HCT116 (cell line): ENCODE measurements at regions of chr17 and their contacts with region 1.

Region 1: GRCh38 chr17:49997791-49998703 is 3.0 kb upstream of the DLX3 start:
- DNase-seq: peak; percentile 88
- ATAC-seq: peak; percentile 86
- H3K4me3 ChIP-seq: no peak overlapping the region
- H3K27ac ChIP-seq: no peak overlapping the region; the same call in 1 of the 2 replicates
- H3K4me1 ChIP-seq: peaks cover 14 to 30% of the 10 kb centered on the region in 2 experiments
- H3K27me3 ChIP-seq: peaks cover 6% of the 10 kb centered on the region; the same call in 1 of the 2 replicates
- CTCF ChIP-seq: peak; percentile 94 to 99 (median 97)
- POLR2A ChIP-seq: no peak
- RAD21 ChIP-seq: peak; percentile 100

Region 2: DNA sequence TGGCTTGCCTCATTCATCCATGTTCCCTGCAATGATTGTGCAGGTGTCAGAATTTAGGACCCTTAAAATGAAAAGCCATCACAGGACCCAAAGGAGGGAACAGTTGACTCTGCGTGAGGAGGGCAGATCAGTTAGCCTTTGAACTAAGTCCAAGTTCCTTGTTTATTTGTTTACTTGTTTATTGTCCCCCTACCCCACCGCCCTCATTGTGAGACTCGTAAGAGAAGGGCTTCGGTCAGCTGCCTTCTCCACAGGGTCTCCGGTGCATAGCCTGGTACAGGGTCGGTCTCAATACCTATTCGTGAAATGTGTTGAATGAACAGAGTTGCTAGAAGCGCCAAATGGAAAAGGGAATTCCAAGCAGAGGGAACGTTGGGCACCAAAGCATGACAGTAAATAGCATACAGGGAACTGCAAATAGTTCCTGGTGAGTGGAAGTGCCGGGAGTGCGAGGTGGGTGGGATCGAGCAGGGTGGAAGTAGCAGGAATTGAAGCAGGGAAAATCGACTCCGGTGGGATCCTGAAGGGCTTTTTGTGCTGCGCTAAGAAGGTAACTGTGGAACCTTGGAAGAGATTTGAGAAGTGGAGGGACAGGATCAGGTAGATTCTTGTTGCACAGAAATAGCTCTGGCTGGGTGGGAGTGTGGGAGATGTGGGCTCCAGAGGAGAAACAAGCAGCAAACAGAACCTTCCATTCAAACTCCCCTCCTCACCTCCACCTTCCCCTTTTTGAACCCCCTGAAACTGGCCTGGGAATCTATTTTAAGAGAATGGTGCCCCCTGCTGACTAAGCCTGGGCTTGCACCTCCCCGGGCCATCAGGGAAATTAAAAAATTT is 303.0 kb before region 1 on chr17:
- CTCF ChIA-PET with region 1: interaction called, 10 read pairs
- POLR2A ChIA-PET with region 1: no interaction called
- RAD21 ChIA-PET with region 1: interaction called in 1 of 2 experiments, 3 read pairs
- intact Hi-C with region 1: no loop called
- DNase-seq: no peak
- ATAC-seq: peak; percentile 73
- H3K4me3 ChIP-seq: no peak overlapping the region
- H3K27ac ChIP-seq: no peak overlapping the region
- H3K4me1 ChIP-seq: no peaks in the 10 kb centered on the region
- H3K27me3 ChIP-seq: no peaks in the 10 kb centered on the region
- CTCF ChIP-seq: peak; percentile 97 to 100 (median 99)
- POLR2A ChIP-seq: no peak
- RAD21 ChIP-seq: peak; percentile 99

Region 3: GRCh38 chr17:49851387-49852291 is 146.4 kb before region 1 on chr17:
- CTCF ChIA-PET with region 1: interaction called, 196 read pairs
- POLR2A ChIA-PET with region 1: no interaction called
- RAD21 ChIA-PET with region 1: interaction called, 3 to 5 read pairs
- intact Hi-C with region 1: no loop called
- DNase-seq: no peak
- ATAC-seq: peak; percentile 88
- H3K4me3 ChIP-seq: peak overlapping the region; percentile 35 to 52
- H3K27ac ChIP-seq: no peak overlapping the region
- H3K4me1 ChIP-seq: peaks cover 0 to 8% of the 10 kb centered on the region in 2 experiments; a peak in 2 of 4 replicates
- H3K27me3 ChIP-seq: no peaks in the 10 kb centered on the region
- CTCF ChIP-seq: peak; percentile 58 to 82 (median 77)
- POLR2A ChIP-seq: no peak
- RAD21 ChIP-seq: peak; percentile 63

Region 4: DNA sequence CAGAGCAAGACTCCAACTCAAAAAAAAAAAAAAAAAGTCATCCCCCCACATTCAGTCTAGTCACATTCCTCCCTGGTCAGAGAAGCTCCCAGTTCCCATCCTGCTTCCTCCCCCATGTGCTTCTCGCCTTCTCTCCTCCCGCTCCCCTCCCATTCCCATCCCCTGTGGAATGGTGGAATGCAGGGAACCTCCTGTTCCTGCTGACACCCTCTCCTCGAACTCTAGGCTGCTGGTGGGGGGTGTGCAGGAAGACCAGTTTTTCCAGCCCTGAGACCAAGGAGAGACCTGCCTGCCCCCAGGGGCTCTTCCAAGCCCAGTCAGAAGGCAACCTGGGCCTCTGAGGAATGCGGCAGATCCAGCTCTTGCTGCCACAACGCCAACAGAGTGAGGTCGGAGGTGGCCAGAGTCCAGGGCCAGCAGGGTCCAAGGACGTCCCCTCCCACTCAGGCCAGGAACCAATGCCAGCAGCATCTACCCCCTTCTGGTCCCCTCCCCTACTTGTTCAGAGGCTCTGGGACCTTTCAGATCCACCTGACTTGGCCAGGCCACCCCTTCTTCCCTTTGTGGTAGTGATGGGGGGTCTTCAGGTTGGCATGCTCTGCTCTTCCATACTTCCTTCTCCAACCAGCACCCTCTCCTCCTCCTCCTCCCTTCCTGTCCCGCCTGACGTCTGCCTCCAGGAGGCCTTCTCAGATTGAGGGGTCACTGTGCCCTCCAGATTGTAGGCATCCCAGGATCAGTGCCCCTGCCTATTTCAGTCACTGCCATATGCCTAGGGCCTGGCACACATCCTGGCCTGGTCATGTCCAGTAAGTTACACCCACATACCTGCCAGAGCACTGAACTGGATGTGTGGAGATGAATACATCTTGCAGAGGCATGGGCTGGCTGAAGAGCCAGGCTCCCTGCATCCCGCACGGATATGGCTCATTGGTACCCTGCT is 110.7 kb before region 1 on chr17:
- CTCF ChIA-PET with region 1: interaction called, 47 read pairs
- POLR2A ChIA-PET with region 1: no interaction called
- RAD21 ChIA-PET with region 1: interaction called in 1 of 2 experiments, 3 read pairs
- intact Hi-C with region 1: no loop called
- DNase-seq: peak; percentile 40
- ATAC-seq: peak; percentile 70
- H3K4me3 ChIP-seq: peak overlapping the region in 1 of 2 experiments; percentile 34; a peak in 2 of 4 replicates
- H3K27ac ChIP-seq: peak overlapping the region; percentile 60
- H3K4me1 ChIP-seq: peaks cover 32 to 39% of the 10 kb centered on the region in 2 experiments
- H3K27me3 ChIP-seq: no peaks in the 10 kb centered on the region
- CTCF ChIP-seq: no peak
- POLR2A ChIP-seq: no peak
- RAD21 ChIP-seq: no peak

Region 5: DNA sequence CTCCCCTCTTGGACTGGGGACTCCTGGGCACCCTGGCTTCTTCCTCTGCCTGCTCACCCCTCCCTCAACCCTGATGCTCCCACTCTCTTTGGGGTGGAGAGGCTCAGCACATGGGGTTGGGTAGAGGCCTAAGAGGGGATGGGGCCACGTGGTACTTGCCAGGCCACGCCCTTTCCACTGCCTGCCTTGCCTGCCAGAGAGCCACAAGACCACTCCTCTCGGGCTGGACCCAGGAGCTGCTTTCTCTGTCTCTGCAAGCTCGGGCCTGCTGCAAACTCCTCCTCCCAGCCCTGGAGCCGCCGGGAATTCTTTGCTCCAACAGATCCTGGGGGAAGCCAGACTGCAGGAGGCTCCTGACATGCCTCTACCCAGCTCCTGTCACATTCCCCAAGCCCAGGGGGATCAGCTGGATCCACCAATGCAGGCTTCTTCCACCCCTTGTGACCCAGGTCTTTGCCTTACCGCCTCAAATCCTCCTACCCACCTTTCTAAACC is 17.3 kb before region 1 on chr17:
- CTCF ChIA-PET with region 1: interaction called, 34 read pairs
- POLR2A ChIA-PET with region 1: no interaction called
- RAD21 ChIA-PET with region 1: interaction called in 1 of 2 experiments, 5 read pairs
- intact Hi-C with region 1: no loop called
- DNase-seq: no peak
- ATAC-seq: no peak
- H3K4me3 ChIP-seq: no peak overlapping the region
- H3K27ac ChIP-seq: no peak overlapping the region
- H3K4me1 ChIP-seq: peaks cover 6 to 14% of the 10 kb centered on the region in 2 experiments; a peak in 3 of 4 replicates
- H3K27me3 ChIP-seq: no peaks in the 10 kb centered on the region
- CTCF ChIP-seq: no peak
- POLR2A ChIP-seq: no peak
- RAD21 ChIP-seq: no peak

Region 6: GRCh38 chr17:50064258-50065001 is 66.4 kb after region 1 on chr17:
- CTCF ChIA-PET with region 1: interaction called, 20 read pairs
- POLR2A ChIA-PET with region 1: interaction called, 5 read pairs
- RAD21 ChIA-PET with region 1: interaction called in 1 of 2 experiments, 3 read pairs
- intact Hi-C with region 1: no loop called
- DNase-seq: peak; percentile 86
- ATAC-seq: peak; percentile 65
- H3K4me3 ChIP-seq: peak overlapping the region; percentile 10 to 50; a peak in 3 of 4 replicates
- H3K27ac ChIP-seq: peak overlapping the region; percentile 93
- H3K4me1 ChIP-seq: peaks cover 75 to 80% of the 10 kb centered on the region in 2 experiments
- H3K27me3 ChIP-seq: no peaks in the 10 kb centered on the region
- CTCF ChIP-seq: no peak
- POLR2A ChIP-seq: no peak
- RAD21 ChIP-seq: no peak